ENCODE measurements at regions of chr4 and their contacts with region 1.

Region 1: DNA sequence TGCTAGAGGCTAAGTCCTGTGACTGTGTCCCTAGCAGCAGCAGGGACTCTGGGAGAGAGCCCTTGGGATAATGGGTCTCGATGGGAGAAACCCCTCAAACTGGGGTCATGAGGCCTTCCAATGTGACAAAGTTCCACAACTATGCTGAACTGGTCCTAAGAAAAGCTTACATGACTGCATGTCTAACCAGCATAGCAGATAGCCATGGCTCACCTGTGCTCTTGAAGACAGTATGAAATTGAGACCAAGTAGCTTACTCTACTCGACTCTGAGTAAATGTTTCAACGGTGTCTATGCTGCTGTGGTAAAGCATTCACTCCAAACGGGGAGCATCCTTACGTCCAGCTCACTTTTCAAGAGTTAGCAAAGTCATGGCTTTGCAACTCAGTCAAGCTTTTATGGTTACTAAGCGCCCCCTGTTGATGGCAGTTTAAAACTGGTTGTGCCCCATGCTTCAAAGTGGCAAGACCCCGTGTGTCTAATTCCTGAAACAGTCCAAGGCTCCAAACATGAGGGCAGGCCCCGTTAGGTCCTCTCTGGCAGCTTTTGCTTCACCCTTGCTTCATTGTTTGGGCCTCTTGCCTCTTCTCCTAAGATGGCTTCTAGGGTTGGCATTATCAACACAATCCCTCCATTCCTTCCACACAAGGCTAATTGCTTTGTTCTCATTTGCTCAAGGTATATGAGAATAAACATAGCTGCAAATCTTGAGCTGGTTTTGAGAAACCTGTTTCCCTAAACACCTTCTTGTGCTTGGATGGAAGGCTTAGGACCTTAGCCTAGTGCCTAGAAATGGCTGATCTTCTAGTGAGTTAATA is 46.6 kb downstream of the CCNG2 start:
- DNase-seq: peak; percentile 81
- H3K4me3 Mint-ChIP-seq: no peak overlapping the region
- H3K27ac Mint-ChIP-seq: no peak overlapping the region
- H3K4me1 Mint-ChIP-seq: peaks cover 2% of the 10 kb centered on the region
- H3K27me3 Mint-ChIP-seq: no peaks in the 10 kb centered on the region

Region 2: GRCh38 chr4:76179398-76180318 is 1023.9 kb before region 1 on chr4:
- CTCF ChIA-PET with region 1: no interaction called
- intact Hi-C with region 1: loop called (anchors 5 kb)
- DNase-seq: peak; percentile 92
- H3K4me3 Mint-ChIP-seq: no peak overlapping the region
- H3K27ac Mint-ChIP-seq: no peak overlapping the region
- H3K4me1 Mint-ChIP-seq: no peaks in the 10 kb centered on the region
- H3K27me3 Mint-ChIP-seq: no peaks in the 10 kb centered on the region

Region 3: GRCh38 chr4:76511947-76512346 is 691.6 kb before region 1 on chr4:
- CTCF ChIA-PET with region 1: interaction called, 8 read pairs
- intact Hi-C with region 1: loop called (anchors 1 kb)
- DNase-seq: no peak
- H3K4me3 Mint-ChIP-seq: no peak overlapping the region
- H3K27ac Mint-ChIP-seq: no peak overlapping the region
- H3K4me1 Mint-ChIP-seq: no peaks in the 10 kb centered on the region
- H3K27me3 Mint-ChIP-seq: peaks cover 2% of the 10 kb centered on the region

Region 4: GRCh38 chr4:77044461-77045150 is 159.0 kb before region 1 on chr4:
- CTCF ChIA-PET with region 1: interaction called, 50 read pairs
- intact Hi-C with region 1: loop called (anchors 1 kb)
- DNase-seq: no peak
- H3K4me3 Mint-ChIP-seq: no peak overlapping the region
- H3K27ac Mint-ChIP-seq: no peak overlapping the region
- H3K4me1 Mint-ChIP-seq: peaks cover 6% of the 10 kb centered on the region
- H3K27me3 Mint-ChIP-seq: no peaks in the 10 kb centered on the region

Region 5: GRCh38 chr4:77095101-77095821 is 108.3 kb before region 1 on chr4:
- CTCF ChIA-PET with region 1: interaction called, 214 read pairs
- intact Hi-C with region 1: loop called (anchors 1 kb)
- DNase-seq: peak; percentile 87
- H3K4me3 Mint-ChIP-seq: no peak overlapping the region
- H3K27ac Mint-ChIP-seq: no peak overlapping the region
- H3K4me1 Mint-ChIP-seq: peaks cover 6% of the 10 kb centered on the region
- H3K27me3 Mint-ChIP-seq: no peaks in the 10 kb centered on the region

Region 6: GRCh38 chr4:77156533-77156911 is 47.1 kb before region 1 on chr4:
- CTCF ChIA-PET with region 1: interaction called, 10 read pairs
- intact Hi-C with region 1: loop called (anchors 1 kb)
- DNase-seq: peak; percentile 97
- H3K4me3 Mint-ChIP-seq: peak overlapping the region; percentile 98
- H3K27ac Mint-ChIP-seq: peak overlapping the region; percentile 97
- H3K4me1 Mint-ChIP-seq: peaks cover 21% of the 10 kb centered on the region
- H3K27me3 Mint-ChIP-seq: no peaks in the 10 kb centered on the region

Region 7: GRCh38 chr4:77215107-77215506 is 11.5 kb after region 1 on chr4:
- CTCF ChIA-PET with region 1: interaction called, 20 read pairs
- intact Hi-C with region 1: no loop called
- DNase-seq: no peak
- H3K4me3 Mint-ChIP-seq: no peak overlapping the region
- H3K27ac Mint-ChIP-seq: no peak overlapping the region
- H3K4me1 Mint-ChIP-seq: no peaks in the 10 kb centered on the region
- H3K27me3 Mint-ChIP-seq: peaks cover 2% of the 10 kb centered on the region